ENCODE measurements at regions of chr1 and their contacts with region 1.

Region 1: DNA sequence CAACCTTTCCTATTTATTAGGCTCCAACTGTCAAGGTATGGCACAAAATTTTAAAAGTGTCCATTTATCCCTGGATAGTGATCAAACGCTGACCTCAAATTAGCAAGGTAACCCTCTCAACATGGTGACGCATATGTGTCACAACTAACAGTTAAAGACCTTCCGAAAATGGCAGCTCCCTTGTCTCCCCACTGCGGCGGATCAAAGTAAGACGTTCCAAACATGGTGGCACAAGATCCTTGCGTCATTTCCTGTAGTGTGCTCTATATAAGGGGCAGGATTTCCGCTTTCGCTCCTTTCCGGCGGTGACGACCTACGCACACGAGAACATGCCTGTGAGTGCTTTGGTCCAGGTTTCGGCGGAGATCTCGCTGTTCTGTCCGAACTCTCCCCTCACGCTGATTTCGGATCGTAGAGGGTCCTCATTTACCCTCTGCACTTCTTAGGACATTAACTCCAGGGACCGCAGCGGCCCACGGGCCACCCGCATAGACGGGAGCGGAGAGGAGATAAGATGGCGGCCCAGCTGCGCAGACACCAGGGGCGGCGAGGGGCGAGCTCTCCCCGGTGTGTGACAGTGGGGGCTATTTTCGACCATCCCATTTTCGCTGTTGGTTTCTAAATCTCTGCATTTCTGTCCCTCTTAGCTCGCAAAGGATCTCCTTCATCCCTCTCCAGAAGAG is at the start of gene RPS27:
- DNase-seq: peak; percentile 92
- H3K4me3 ChIP-seq: peak within 1 kb of the TSS; percentile 74 to 95 (median 80)
- H3K27ac ChIP-seq: peak within 1 kb of the TSS; percentile 94 to 97 (median 94)
- H3K4me1 ChIP-seq: peaks cover 5 to 43% (median 22%) of the 10 kb centered on the region in 4 donors
- H3K27me3 ChIP-seq: no peaks in the 10 kb centered on the region
- CTCF ChIP-seq: peak in 2 of 5 experiments; percentile 5 to 31
- EP300 ChIP-seq: peak; percentile 50
- POLR2A ChIP-seq: peak; percentile 100
- total RNA-seq, gene RPS27: 222 to 1,839 (median 900) TPM

Region 2: GRCh38 chr1:153510984-153511410 is 479.6 kb before region 1 on chr1:
- in situ Hi-C with region 1: loop called in 3 of 4 experiments (anchors 25 kb)
- intact Hi-C with region 1: no loop called
- DNase-seq: peak; percentile 89
- H3K4me3 ChIP-seq: no peak overlapping the region
- H3K27ac ChIP-seq: peak overlapping the region in 1 of 4 donors; percentile 8
- H3K4me1 ChIP-seq: peaks cover 10 to 43% (median 13%) of the 10 kb centered on the region in 4 donors
- H3K27me3 ChIP-seq: no peaks in the 10 kb centered on the region
- CTCF ChIP-seq: peak; percentile 85 to 95 (median 91)
- EP300 ChIP-seq: no peak
- POLR2A ChIP-seq: no peak

Region 3: DNA sequence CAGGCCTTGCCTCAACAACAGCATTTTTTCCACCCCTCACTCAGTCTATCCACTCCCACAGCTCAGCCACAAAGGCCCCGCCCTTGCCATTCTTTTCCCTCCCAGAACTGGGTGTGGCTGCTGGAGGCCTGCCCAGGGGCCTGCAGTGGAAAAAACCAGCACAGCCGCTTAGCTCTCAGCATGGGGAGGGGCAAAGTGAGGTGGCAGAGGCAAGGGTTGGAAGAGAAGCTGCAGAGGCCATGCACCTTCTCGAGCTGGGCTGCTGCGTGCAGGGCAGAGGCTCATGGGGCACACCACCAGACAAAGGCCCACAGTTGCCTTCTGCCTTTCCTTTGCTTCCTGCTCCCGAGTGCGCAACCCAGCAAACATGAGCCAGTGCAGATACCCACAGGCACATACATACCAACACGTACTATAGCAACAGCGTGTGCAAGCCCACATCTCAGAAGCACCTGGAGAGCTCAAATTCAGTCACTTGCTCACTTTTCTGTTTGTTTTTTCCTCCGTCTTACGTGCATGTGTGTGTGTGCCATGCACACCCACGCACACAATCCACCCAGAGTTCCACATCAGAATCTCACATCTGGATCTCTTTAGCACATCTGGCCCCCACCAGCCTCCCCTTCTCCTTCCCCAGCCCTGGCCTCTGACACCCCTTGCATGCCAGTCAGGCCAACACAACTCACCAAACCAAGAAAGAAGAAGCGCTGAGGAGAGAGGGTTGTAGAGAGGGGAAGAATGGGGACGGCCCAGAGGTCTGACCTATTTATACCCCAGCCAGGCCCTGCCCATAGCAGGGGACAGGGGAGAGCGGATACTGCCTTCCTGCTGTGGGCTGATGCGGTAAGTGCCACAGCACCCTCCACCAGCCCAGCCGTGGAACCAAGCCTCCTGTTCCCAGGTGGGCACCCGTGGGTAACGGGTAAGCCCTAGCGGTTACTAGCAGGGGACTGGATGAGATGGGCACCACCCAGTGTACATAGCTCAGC is 445.2 kb before region 1 on chr1 and contains the start of gene S100A4:
- in situ Hi-C with region 1: loop called in 1 of 4 experiments (anchors 25 kb)
- intact Hi-C with region 1: no loop called
- DNase-seq: peak; percentile 97
- H3K4me3 ChIP-seq: peak within 1 kb of the TSS in 3 of 4 donors; percentile 8 to 39 (median 35)
- H3K27ac ChIP-seq: peak within 1 kb of the TSS; percentile 84 to 92 (median 90)
- H3K4me1 ChIP-seq: peaks cover 48 to 81% (median 61%) of the 10 kb centered on the region in 4 donors
- H3K27me3 ChIP-seq: no peaks in the 10 kb centered on the region
- CTCF ChIP-seq: no peak
- EP300 ChIP-seq: no peak
- POLR2A ChIP-seq: peak; percentile 56
- total RNA-seq, gene S100A4: 40.8 to 138 (median 78.6) TPM

Region 4: GRCh38 chr1:153670859-153671627 is 319.6 kb before region 1 on chr1 and contains the start of gene ILF2:
- in situ Hi-C with region 1: loop called in 3 of 4 experiments (anchors 10 to 25 kb)
- intact Hi-C with region 1: loop called (anchors 10 kb)
- DNase-seq: peak; percentile 98
- H3K4me3 ChIP-seq: peak within 1 kb of the TSS; percentile 43 to 80 (median 71)
- H3K27ac ChIP-seq: peak within 1 kb of the TSS; percentile 89 to 95 (median 92)
- H3K4me1 ChIP-seq: peaks cover 9 to 33% (median 17%) of the 10 kb centered on the region in 4 donors
- H3K27me3 ChIP-seq: no peaks in the 10 kb centered on the region
- CTCF ChIP-seq: peak in 1 of 5 experiments; percentile 23
- EP300 ChIP-seq: no peak
- POLR2A ChIP-seq: peak; percentile 92
- total RNA-seq, gene ILF2: 16.5 to 102 (median 66.5) TPM

Region 5: DNA sequence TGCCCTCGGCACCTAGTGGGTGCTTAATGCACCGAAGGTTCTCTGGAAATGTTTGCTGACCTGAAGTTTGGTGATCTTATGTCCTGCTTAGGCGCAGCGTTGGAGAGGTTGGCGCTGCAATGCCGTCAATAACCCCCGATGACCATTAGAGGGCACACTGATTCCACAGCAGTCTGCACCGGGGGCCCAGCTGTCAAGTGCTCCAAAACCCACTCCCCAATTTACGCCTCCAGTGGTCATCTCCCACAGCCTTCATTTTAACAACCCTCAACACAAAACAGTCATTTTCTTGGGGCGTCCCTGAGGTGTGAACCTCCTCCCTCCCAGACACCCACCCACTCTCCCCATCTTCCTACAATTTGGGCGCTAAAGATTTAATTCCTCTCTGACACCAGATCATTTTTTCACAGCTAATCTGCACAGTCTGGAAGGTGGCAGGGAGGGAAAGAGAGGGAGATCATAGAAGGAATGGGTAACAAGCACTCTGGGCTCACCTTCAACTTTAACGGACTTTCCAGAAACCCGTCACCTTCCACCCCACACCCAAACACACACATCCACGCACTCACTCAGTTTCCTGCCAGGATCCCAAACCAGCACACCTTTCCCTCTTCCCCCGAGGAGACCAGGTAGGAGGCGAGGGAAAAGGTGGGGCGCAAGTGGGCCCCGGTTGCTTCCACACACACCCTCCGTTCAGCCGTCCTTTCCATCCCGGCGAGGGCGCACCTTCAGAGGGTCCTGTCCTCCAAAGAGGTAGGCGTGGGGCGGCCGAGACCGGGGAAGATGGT is 312.7 kb before region 1 on chr1:
- in situ Hi-C with region 1: loop called in 3 of 4 experiments (anchors 10 to 25 kb)
- intact Hi-C with region 1: loop called (anchors 10 kb)
- DNase-seq: peak; percentile 54
- H3K4me3 ChIP-seq: peak overlapping the region in 3 of 4 donors; percentile 16 to 53 (median 44)
- H3K27ac ChIP-seq: peak overlapping the region; percentile 12 to 64 (median 39)
- H3K4me1 ChIP-seq: peaks cover 10 to 27% (median 20%) of the 10 kb centered on the region in 4 donors
- H3K27me3 ChIP-seq: peaks cover 49% of the 10 kb centered on the region
- CTCF ChIP-seq: peak; percentile 73 to 86 (median 84)
- EP300 ChIP-seq: no peak
- POLR2A ChIP-seq: no peak

Region 6: GRCh38 chr1:153796791-153797659 is 193.6 kb before region 1 on chr1:
- in situ Hi-C with region 1: loop called in 2 of 4 experiments (anchors 10 kb)
- intact Hi-C with region 1: loop called (anchors 2 kb)
- DNase-seq: peak; percentile 90
- H3K4me3 ChIP-seq: no peak overlapping the region
- H3K27ac ChIP-seq: no peak overlapping the region
- H3K4me1 ChIP-seq: peaks cover 0 to 5% (median 1%) of the 10 kb centered on the region in 4 donors
- H3K27me3 ChIP-seq: no peaks in the 10 kb centered on the region
- CTCF ChIP-seq: peak; percentile 92 to 95 (median 93)
- EP300 ChIP-seq: no peak
- POLR2A ChIP-seq: no peak

Region 7: GRCh38 chr1:153816283-153816889 is 174.2 kb before region 1 on chr1:
- in situ Hi-C with region 1: loop called in 1 of 4 experiments (anchors 10 kb)
- intact Hi-C with region 1: no loop called
- DNase-seq: no peak
- H3K4me3 ChIP-seq: no peak overlapping the region
- H3K27ac ChIP-seq: no peak overlapping the region
- H3K4me1 ChIP-seq: peaks cover 0 to under 1% (median under 1%) of the 10 kb centered on the region in 4 donors
- H3K27me3 ChIP-seq: no peaks in the 10 kb centered on the region
- CTCF ChIP-seq: no peak
- EP300 ChIP-seq: no peak
- POLR2A ChIP-seq: no peak

Region 8: DNA sequence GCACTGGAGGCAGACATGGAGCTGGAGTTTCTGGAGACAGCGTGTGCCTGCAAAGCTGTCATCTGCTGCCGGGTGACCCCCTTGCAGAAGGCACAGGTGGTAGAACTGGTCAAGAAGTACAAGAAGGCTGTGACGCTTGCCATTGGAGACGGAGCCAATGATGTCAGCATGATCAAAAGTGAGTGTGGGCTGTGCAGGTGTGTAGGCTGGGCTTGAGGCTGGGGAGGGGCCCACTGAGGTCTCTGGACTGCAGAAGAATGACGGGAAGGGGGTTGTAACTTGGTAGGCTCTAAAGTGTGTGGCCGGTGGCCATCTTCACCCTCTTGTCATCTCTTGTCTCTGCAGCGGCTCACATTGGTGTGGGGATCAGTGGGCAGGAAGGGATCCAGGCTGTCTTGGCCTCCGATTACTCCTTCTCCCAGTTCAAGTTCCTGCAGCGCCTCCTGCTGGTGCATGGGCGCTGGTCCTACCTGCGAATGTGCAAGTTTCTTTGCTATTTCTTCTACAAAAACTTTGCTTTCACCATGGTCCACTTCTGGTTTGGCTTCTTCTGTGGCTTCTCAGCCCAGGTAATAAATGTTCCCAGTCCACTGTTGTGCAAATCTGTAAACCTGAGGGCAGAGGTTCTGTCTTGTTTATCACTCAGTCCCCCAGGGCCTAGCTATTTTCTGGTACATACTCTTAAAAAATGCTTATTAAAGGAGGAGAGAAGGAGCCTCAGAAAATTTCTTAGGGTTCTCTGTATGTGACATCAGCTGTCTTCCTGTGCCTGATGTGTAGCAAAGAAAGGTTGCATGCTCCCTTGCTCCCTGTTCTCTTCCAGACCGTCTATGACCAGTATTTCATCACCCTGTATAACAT is 354.6 kb after region 1 on chr1:
- in situ Hi-C with region 1: no loop called
- intact Hi-C with region 1: no loop called
- DNase-seq: peak; percentile 57
- H3K4me3 ChIP-seq: no peak overlapping the region
- H3K27ac ChIP-seq: no peak overlapping the region
- H3K4me1 ChIP-seq: peaks cover 0 to 4% (median 0%) of the 10 kb centered on the region in 4 donors
- H3K27me3 ChIP-seq: no peaks in the 10 kb centered on the region
- CTCF ChIP-seq: peak in 4 of 5 experiments; percentile 36 to 52 (median 46)
- EP300 ChIP-seq: no peak
- POLR2A ChIP-seq: no peak

Measured in transverse colon (tissue), 4 donors.